ENCODE measurements at regions of chr6 and their contacts with region 1.

Region 1: DNA sequence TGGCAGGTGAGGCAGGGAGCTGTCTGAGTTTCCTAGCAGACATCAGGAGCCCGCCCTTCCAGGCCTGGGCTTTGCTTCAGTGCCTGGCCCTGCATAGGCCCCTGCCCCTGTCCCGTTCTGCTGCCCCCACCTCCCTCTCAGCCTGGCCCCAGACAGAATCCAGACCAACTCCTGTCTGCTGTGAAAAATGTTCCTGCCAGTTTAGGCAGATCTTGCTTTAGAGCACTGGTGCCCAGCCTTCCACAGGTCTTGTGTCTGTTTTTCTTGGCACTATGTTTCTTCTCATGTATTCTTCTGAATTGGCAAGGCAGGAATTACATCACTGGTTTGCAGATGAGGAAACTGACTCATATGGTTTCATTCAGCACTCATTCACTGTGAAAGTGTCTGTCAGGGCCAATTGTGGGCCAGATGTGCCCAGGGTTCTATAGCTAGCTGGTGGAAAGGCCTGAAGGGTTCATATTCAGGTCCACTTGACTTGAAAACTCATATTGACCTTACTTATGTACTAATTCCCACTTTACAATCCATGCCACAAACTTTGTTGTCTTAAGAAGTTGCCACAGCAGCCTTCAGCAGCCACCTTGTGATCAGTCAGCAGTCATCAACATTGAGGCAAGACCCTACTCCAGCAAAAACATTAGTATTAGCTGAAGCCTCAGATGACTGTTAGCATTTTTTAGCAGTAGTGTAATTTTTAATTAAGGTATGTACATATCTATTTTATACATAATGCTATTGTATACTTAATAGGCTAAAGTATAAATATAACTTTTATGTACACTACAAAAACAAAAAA is 40.5 kb downstream of the HLA-F start:
- DNase-seq: no peak
- ATAC-seq: no peak
- H3K4me3 ChIP-seq: no peak overlapping the region
- H3K4me3 Mint-ChIP-seq: no peak overlapping the region
- H3K27ac ChIP-seq: no peak overlapping the region
- H3K27ac Mint-ChIP-seq: no peak overlapping the region
- H3K4me1 ChIP-seq: no peaks in the 10 kb centered on the region
- H3K4me1 Mint-ChIP-seq: peaks cover 6% of the 10 kb centered on the region
- H3K27me3 ChIP-seq: no peaks in the 10 kb centered on the region
- H3K27me3 Mint-ChIP-seq: peaks cover 18% of the 10 kb centered on the region
- CTCF ChIP-seq: no peak

Region 2: GRCh38 chr6:29602564-29603361 is 160.9 kb before region 1 on chr6:
- CTCF ChIA-PET with region 1: no interaction called
- POLR2A ChIA-PET with region 1: no interaction called
- intact Hi-C with region 1: no loop called
- DNase-seq: peak in 1 of 9 experiments; percentile 16
- ATAC-seq: no peak
- H3K4me3 ChIP-seq: no peak overlapping the region
- H3K4me3 Mint-ChIP-seq: no peak overlapping the region
- H3K27ac ChIP-seq: no peak overlapping the region
- H3K27ac Mint-ChIP-seq: no peak overlapping the region
- H3K4me1 ChIP-seq: no peaks in the 10 kb centered on the region
- H3K4me1 Mint-ChIP-seq: no peaks in the 10 kb centered on the region
- H3K27me3 ChIP-seq: no peaks in the 10 kb centered on the region
- H3K27me3 Mint-ChIP-seq: no peaks in the 10 kb centered on the region
- CTCF ChIP-seq: no peak

Region 3: DNA sequence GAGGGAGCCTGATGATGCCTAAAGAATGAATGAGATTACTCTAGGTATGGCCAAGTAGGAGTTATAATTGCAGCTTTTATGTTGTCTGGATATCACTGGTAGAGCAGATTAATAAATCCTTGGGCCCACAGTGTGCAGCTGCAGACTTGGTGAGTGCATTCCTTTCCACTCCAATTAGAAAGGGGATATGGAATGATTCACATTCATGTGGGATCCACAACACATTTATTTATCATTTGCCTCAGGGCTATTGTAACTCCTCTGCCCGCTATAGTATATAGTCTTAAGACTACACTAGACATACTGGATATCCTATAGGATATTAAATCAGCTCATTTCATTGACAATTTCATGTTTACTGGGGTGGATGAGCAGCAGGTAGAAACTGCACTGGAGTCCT is 52.3 kb after region 1 on chr6:
- CTCF ChIA-PET with region 1: no interaction called
- POLR2A ChIA-PET with region 1: no interaction called
- intact Hi-C with region 1: no loop called
- DNase-seq: no peak
- ATAC-seq: no peak
- H3K4me3 ChIP-seq: no peak overlapping the region
- H3K4me3 Mint-ChIP-seq: no peak overlapping the region
- H3K27ac ChIP-seq: no peak overlapping the region
- H3K27ac Mint-ChIP-seq: no peak overlapping the region
- H3K4me1 ChIP-seq: no peaks in the 10 kb centered on the region
- H3K4me1 Mint-ChIP-seq: no peaks in the 10 kb centered on the region
- H3K27me3 ChIP-seq: peaks cover 0 to 3% of the 10 kb centered on the region in 2 experiments
- H3K27me3 Mint-ChIP-seq: peaks cover 29% of the 10 kb centered on the region
- CTCF ChIP-seq: no peak

Region 4: DNA sequence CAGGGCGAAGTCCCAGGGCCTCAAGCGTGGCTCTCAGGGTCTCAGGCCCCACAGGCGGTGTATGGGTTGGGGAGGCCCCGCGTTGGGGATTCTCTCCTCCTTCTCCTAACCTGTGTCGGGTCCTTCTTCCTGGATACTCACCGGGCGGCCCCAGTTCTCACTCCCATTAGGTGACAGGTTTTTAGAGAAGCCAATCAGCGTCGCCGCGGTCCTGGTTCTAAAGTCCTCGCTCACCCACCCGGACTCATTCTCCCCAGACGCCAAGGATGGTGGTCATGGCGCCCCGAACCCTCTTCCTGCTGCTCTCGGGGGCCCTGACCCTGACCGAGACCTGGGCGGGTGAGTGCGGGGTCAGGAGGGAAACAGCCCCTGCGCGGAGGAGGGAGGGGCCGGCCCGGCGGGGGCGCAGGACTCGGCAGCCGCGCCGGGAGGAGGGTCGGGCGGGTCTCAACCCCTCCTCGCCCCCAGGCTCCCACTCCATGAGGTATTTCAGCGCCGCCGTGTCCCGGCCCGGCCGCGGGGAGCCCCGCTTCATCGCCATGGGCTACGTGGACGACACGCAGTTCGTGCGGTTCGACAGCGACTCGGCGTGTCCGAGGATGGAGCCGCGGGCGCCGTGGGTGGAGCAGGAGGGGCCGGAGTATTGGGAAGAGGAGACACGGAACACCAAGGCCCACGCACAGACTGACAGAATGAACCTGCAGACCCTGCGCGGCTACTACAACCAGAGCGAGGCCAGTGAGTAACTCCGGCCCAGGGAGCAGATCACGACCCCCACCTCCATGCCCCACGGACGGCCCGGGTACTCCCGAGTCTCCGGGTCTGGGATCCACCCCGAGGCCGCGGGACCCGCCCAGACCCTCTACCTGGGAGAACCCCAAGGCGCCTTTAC is 64.1 kb after region 1 on chr6 and contains the start of gene HLA-G:
- CTCF ChIA-PET with region 1: no interaction called
- POLR2A ChIA-PET with region 1: no interaction called
- intact Hi-C with region 1: loop called in 1 of 2 experiments (anchors 2 kb)
- DNase-seq: peak in 2 of 9 experiments; percentile 22
- ATAC-seq: no peak
- H3K4me3 ChIP-seq: peak within 1 kb of the TSS; percentile 22 to 41
- H3K4me3 Mint-ChIP-seq: peak within 1 kb of the TSS; percentile 74
- H3K27ac ChIP-seq: no peak within 1 kb of the TSS
- H3K27ac Mint-ChIP-seq: no peak within 1 kb of the TSS
- H3K4me1 ChIP-seq: peaks cover 7% of the 10 kb centered on the region
- H3K4me1 Mint-ChIP-seq: peaks cover 11% of the 10 kb centered on the region
- H3K27me3 ChIP-seq: peaks cover 10 to 12% of the 10 kb centered on the region in 2 experiments
- H3K27me3 Mint-ChIP-seq: peaks cover 63% of the 10 kb centered on the region
- CTCF ChIP-seq: no peak
- total RNA-seq, gene HLA-G: 6.9 to 7.2 TPM

Region 5: DNA sequence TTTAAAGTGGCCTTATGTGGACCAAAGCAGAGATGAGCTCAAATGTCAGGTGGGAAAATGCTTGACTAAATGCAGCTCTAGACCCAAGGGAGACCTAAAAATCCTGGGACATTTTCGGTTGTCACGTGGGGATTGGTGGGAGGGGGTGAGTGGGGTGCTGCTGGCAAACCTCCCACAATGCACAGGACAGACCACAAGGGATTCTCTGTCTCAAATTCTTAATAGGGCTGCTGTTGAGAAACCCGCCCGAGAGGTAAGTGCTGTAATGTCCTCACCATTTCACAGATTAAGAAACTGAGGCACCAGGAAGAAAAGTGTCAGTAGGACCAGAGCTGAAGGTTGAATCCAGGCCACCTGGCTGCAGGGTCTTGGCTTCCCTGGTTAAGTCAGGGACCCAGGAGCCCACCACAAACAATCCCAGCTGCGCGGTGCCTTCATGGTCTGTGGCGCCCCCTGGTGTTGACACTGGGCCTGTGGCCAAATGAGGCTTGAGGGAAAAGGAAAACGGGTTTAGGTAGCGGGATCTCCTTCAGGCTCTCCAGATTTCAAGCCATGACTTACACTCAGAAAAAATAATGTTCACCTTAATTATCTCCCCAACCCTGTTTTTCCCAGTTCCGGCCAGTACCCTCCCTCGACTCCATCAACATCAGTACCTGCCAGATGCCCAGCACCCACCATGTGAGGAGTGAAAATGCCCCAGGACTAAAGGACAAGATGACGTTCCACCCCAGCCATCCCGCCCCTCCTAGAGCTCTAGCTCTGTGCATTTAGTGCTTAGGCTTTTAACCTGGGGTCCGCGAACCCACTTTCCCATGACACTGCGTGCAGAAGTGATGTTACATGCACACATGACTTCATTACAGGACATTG is 71.1 kb after region 1 on chr6:
- CTCF ChIA-PET with region 1: interaction called, 12 read pairs
- POLR2A ChIA-PET with region 1: no interaction called
- intact Hi-C with region 1: no loop called
- DNase-seq: peak; percentile 26 to 77 (median 61)
- ATAC-seq: peak; percentile 57
- H3K4me3 ChIP-seq: no peak overlapping the region
- H3K4me3 Mint-ChIP-seq: no peak overlapping the region
- H3K27ac ChIP-seq: no peak overlapping the region
- H3K27ac Mint-ChIP-seq: no peak overlapping the region
- H3K4me1 ChIP-seq: no peaks in the 10 kb centered on the region
- H3K4me1 Mint-ChIP-seq: no peaks in the 10 kb centered on the region
- H3K27me3 ChIP-seq: peaks cover 0 to 8% of the 10 kb centered on the region in 2 experiments
- H3K27me3 Mint-ChIP-seq: peaks cover 68% of the 10 kb centered on the region
- CTCF ChIP-seq: peak; percentile 79